ENCODE measurements at regions of chr1 and their contacts with region 1.

Region 1: DNA sequence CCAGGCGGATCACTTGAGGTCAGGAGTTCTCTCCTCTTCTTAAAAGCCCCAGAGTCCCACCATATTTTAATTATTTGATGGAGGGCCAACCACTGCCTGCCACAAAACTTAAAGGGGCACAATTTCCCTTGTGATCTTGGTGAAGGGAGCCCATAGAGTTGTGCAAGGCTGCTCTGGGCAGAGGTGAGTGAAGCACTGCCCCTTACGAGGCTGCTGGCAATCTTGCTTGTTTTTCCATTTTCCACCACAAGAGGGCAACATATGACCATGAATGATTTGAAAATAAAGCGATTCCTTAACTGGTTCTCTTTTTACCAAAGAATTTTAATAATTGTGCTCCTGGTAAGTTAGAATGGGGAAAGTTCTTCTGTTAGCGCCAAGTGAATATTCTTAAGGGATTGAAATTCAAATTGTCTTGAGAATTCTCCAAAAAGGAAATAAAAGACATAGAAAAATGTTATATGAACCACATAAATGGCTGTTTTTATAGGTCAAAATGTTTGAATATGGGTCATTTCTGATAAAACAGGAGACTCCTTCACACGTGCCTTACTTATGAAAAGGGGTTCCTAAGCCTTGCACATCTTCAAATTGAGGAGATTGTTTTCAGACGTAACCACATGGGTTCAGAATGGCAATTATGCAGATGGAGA is 22.7 kb downstream of the PGM1 start:
- DNase-seq: peak; percentile 72
- H3K4me3 ChIP-seq: no peak overlapping the region
- H3K27ac ChIP-seq: no peak overlapping the region
- H3K4me1 ChIP-seq: no peaks in the 10 kb centered on the region
- H3K27me3 ChIP-seq: no peaks in the 10 kb centered on the region
- CTCF ChIP-seq: peak; percentile 61 to 81 (median 78)
- POLR2A ChIP-seq: no peak

Region 2: GRCh38 chr1:63691701-63692425 is 76.0 kb after region 1 on chr1:
- intact Hi-C with region 1: loop called (anchors 5 kb)
- DNase-seq: peak; percentile 66
- H3K4me3 ChIP-seq: no peak overlapping the region
- H3K27ac ChIP-seq: peak overlapping the region in 1 of 2 donors; percentile 21
- H3K4me1 ChIP-seq: no peaks in the 10 kb centered on the region
- H3K27me3 ChIP-seq: no peaks in the 10 kb centered on the region
- CTCF ChIP-seq: peak; percentile 43 to 82 (median 72)
- POLR2A ChIP-seq: no peak

Region 3: GRCh38 chr1:63917571-63918417 is 301.9 kb after region 1 on chr1:
- intact Hi-C with region 1: loop called (anchors 5 kb)
- DNase-seq: no peak
- H3K4me3 ChIP-seq: no peak overlapping the region
- H3K27ac ChIP-seq: no peak overlapping the region
- H3K4me1 ChIP-seq: peaks cover 3% of the 10 kb centered on the region
- H3K27me3 ChIP-seq: no peaks in the 10 kb centered on the region
- CTCF ChIP-seq: peak in 1 of 4 experiments; percentile 6
- POLR2A ChIP-seq: no peak

Region 4: GRCh38 chr1:64163970-64164369 is 548.1 kb after region 1 on chr1:
- intact Hi-C with region 1: loop called (anchors 5 kb)
- DNase-seq: no peak
- H3K4me3 ChIP-seq: no peak overlapping the region
- H3K27ac ChIP-seq: no peak overlapping the region
- H3K4me1 ChIP-seq: no peaks in the 10 kb centered on the region
- H3K27me3 ChIP-seq: no peaks in the 10 kb centered on the region
- CTCF ChIP-seq: peak in 2 of 4 experiments; percentile 25 to 34
- POLR2A ChIP-seq: no peak